ENCODE measurements at regions of chr15 and their contacts with region 1.

Region 1: DNA sequence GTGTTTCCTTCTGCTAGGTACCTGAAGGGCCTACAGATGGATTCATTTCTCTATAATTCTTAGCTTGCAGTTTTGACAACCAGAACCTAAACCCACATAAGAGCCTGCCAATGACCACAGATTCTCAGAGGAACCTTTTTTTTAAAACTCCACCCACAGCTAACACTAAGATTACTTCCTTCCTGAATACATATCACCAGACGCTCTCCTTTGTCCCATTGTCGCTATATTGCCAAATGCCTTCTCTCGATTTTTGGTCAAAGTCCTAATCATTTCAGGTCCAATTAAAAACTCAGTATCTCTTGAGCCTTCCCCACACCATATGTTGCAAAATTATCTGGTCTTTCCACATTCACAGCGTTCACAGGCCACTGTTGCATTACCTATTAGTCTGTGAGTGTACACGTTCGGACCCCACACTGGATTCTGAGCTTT is 12.4 kb downstream of the ZNF710 start:
- DNase-seq: peak in 3 of 14 experiments; percentile 73 to 87 (median 79)
- ATAC-seq: peak; percentile 88
- H3K4me3 ChIP-seq: peak overlapping the region; percentile 10
- H3K4me3 Mint-ChIP-seq: peak overlapping the region; percentile 68
- H3K27ac ChIP-seq: peak overlapping the region in 1 of 2 donors; percentile 14
- H3K27ac Mint-ChIP-seq: peak overlapping the region; percentile 61
- H3K4me1 ChIP-seq: peaks cover 55% of the 10 kb centered on the region
- H3K4me1 Mint-ChIP-seq: peaks cover 69% of the 10 kb centered on the region
- H3K27me3 ChIP-seq: no peaks in the 10 kb centered on the region
- H3K27me3 Mint-ChIP-seq: no peaks in the 10 kb centered on the region
- CTCF ChIP-seq: no peak

Region 2: DNA sequence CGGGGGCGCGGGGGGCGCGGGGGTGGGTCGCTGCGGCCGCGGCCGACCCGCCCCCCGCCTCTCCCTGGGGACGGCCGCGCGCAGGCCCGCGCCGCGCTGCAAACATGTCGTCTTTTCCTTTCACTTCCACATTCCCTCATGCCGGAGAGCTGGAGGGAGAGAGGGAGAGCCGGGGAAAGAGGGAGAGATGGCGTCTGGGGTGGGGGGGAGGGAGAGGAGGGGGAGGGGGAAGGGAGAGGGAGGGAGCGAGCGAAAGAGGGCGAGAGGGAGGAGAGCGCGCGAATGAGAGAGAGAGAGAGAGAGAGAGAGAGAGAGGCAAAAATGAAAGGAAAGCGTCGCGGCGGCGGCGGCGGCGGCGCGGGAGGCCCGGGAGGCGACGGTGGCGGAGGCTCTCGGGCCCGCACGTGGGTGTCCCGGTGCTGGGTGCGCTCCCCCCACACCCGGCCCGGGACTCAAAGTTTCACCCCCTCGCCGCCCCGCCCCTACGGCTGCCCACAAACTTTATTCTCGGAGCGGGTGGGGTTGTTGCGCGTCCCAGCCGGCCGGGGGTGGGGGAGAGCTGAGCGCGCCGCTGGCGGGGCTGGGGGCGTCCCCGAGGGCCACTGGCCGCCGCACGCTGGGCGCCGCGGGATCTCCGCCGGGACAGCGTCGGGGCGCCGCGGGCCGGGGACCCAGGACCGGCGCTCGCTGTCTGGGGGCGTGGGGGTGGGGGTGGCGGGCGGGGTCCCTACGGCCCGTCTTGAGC is 11.7 kb before region 1 on chr15:
- CTCF ChIA-PET with region 1: no interaction called
- POLR2A ChIA-PET with region 1: interaction called, 13 read pairs
- intact Hi-C with region 1: loop called in 1 of 2 experiments (anchors 2 kb)
- DNase-seq: peak; percentile 29 to 85 (median 54)
- ATAC-seq: peak; percentile 64
- H3K4me3 ChIP-seq: peak overlapping the region; percentile 60
- H3K4me3 Mint-ChIP-seq: peak overlapping the region; percentile 88
- H3K27ac ChIP-seq: no peak overlapping the region
- H3K27ac Mint-ChIP-seq: peak overlapping the region; percentile 97
- H3K4me1 ChIP-seq: peaks cover 54% of the 10 kb centered on the region
- H3K4me1 Mint-ChIP-seq: peaks cover 51% of the 10 kb centered on the region
- H3K27me3 ChIP-seq: no peaks in the 10 kb centered on the region
- H3K27me3 Mint-ChIP-seq: peaks cover 5% of the 10 kb centered on the region
- CTCF ChIP-seq: no peak

Region 3: DNA sequence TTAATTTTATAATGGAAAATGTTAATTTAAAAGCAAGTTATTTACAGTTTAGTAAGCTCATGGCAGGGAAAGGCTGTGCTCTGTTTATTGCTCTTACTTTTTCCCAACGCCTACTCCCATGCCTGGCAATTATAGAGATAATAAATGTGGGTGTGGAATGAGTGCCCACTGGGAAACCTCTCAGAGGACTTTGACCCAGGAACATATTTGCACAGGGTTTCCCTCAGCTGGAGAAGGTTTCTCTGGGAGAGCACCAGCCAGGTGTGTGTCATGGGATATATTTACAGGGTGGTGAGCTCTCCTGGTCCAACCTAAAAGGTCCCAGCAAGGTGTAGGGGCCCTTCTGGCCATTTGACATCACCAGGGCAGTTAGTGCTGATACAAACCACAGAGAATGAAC is 15.5 kb after region 1 on chr15:
- CTCF ChIA-PET with region 1: no interaction called
- POLR2A ChIA-PET with region 1: interaction called, 4 read pairs
- intact Hi-C with region 1: loop called (anchors 1 to 2 kb)
- DNase-seq: no peak
- ATAC-seq: no peak
- H3K4me3 ChIP-seq: no peak overlapping the region
- H3K4me3 Mint-ChIP-seq: no peak overlapping the region
- H3K27ac ChIP-seq: no peak overlapping the region
- H3K27ac Mint-ChIP-seq: no peak overlapping the region
- H3K4me1 ChIP-seq: peaks cover 32% of the 10 kb centered on the region
- H3K4me1 Mint-ChIP-seq: peaks cover 32% of the 10 kb centered on the region
- H3K27me3 ChIP-seq: no peaks in the 10 kb centered on the region
- H3K27me3 Mint-ChIP-seq: no peaks in the 10 kb centered on the region
- CTCF ChIP-seq: no peak

Region 4: GRCh38 chr15:90035095-90035827 is 21.7 kb after region 1 on chr15:
- CTCF ChIA-PET with region 1: no interaction called
- POLR2A ChIA-PET with region 1: interaction called, 6 read pairs
- intact Hi-C with region 1: loop called in 1 of 2 experiments (anchors 2 kb)
- DNase-seq: peak in 3 of 14 experiments; percentile 31 to 55 (median 37)
- ATAC-seq: no peak
- H3K4me3 ChIP-seq: peak overlapping the region; percentile 25
- H3K4me3 Mint-ChIP-seq: peak overlapping the region; percentile 20
- H3K27ac ChIP-seq: peak overlapping the region; percentile 37 to 59
- H3K27ac Mint-ChIP-seq: peak overlapping the region; percentile 82
- H3K4me1 ChIP-seq: peaks cover 78% of the 10 kb centered on the region
- H3K4me1 Mint-ChIP-seq: peaks cover 76% of the 10 kb centered on the region
- H3K27me3 ChIP-seq: no peaks in the 10 kb centered on the region
- H3K27me3 Mint-ChIP-seq: no peaks in the 10 kb centered on the region
- CTCF ChIP-seq: no peak

Region 5: GRCh38 chr15:90388462-90389380 is 375.2 kb after region 1 on chr15:
- CTCF ChIA-PET with region 1: no interaction called
- POLR2A ChIA-PET with region 1: no interaction called
- intact Hi-C with region 1: no loop called
- DNase-seq: peak in 13 of 14 experiments; percentile 26 to 79 (median 42)
- ATAC-seq: peak; percentile 13
- H3K4me3 ChIP-seq: peak overlapping the region; percentile 89
- H3K4me3 Mint-ChIP-seq: peak overlapping the region; percentile 95
- H3K27ac ChIP-seq: peak overlapping the region; percentile 73 to 75
- H3K27ac Mint-ChIP-seq: peak overlapping the region; percentile 95
- H3K4me1 ChIP-seq: peaks cover 45% of the 10 kb centered on the region
- H3K4me1 Mint-ChIP-seq: peaks cover 59% of the 10 kb centered on the region
- H3K27me3 ChIP-seq: no peaks in the 10 kb centered on the region
- H3K27me3 Mint-ChIP-seq: no peaks in the 10 kb centered on the region
- CTCF ChIP-seq: no peak

Measured in CD4-positive, alpha-beta T cell (primary cell).